Aorta (tissue), 5 donors: ENCODE measurements at regions of chrX and their contacts with region 1.

Region 1: GRCh38 chrX:24498975-24499374 is 33.9 kb downstream of the PDK3 start:
- DNase-seq: no peak
- ATAC-seq: no peak
- H3K4me3 ChIP-seq: no peak overlapping the region
- H3K27ac ChIP-seq: no peak overlapping the region
- H3K4me1 ChIP-seq: no peaks in the 10 kb centered on the region
- H3K27me3 ChIP-seq: no peaks in the 10 kb centered on the region

Region 2: DNA sequence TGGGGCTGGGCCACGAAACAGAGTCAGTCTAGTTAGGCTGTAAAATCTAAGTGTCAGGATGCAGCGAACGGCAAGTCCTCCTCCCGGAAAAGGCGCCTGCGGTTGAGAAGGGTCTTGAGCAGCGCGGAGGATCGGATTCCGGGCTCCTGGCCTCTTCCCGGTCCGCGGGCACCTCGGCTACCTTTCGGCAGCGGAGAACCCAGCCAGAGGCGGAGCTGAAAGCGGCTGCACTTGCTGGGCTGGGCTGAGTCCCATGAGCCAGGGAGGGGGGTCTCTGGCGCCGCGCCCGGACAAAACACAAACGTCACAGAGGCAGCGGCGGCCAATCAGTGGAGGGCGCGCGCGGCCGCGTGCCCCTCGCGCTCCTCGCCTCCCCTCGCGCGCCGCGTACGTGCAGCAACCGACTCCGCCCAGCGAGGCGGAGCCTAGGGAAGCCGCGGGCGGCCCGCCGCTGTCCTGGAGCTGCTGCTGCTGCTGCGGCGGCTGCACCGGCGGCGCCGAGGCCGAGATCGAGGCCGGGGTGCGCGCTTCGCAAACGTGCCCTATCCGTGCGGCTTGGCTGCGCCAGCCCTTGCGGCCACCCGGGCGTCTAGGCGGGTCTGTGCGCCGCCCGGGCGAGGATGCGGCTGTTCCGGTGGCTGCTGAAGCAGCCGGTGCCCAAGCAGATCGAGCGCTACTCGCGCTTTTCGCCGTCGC is 34.0 kb before region 1 on chrX and contains the start of gene PDK3:
- intact Hi-C with region 1: loop called in 1 of 2 experiments (anchors 5 kb)
- DNase-seq: peak; percentile 92 to 95
- ATAC-seq: peak; percentile 95
- H3K4me3 ChIP-seq: peak within 1 kb of the TSS; percentile 53 to 56
- H3K27ac ChIP-seq: peak within 1 kb of the TSS; percentile 68 to 83
- H3K4me1 ChIP-seq: peaks cover 0 to 3% of the 10 kb centered on the region in 2 donors
- H3K27me3 ChIP-seq: no peaks in the 10 kb centered on the region
- total RNA-seq, gene PDK3: 62.1 to 119 TPM